ENCODE measurements at regions of chr4 and their contacts with region 1.

Region 1: GRCh38 chr4:20422398-20422797 is 170.7 kb downstream of the SLIT2 start:
- DNase-seq: peak; percentile 47
- ATAC-seq: peak; percentile 90
- H3K4me3 ChIP-seq: no peak overlapping the region
- H3K27ac ChIP-seq: no peak overlapping the region
- H3K4me1 ChIP-seq: 0 out of 4 replicates have a peak, but pooled peaks cover 0 to 2% of the 10 kb centered on the region in 2 experiments
- H3K27me3 ChIP-seq: 0 out of 2 replicates have a peak, but pooled peaks cover 7% of the 10 kb centered on the region
- CTCF ChIP-seq: peak; percentile 38 to 55 (median 50); a peak in 5 of 6 replicates
- POLR2A ChIP-seq: no peak
- RAD21 ChIP-seq: peak; percentile 60

Region 2: DNA sequence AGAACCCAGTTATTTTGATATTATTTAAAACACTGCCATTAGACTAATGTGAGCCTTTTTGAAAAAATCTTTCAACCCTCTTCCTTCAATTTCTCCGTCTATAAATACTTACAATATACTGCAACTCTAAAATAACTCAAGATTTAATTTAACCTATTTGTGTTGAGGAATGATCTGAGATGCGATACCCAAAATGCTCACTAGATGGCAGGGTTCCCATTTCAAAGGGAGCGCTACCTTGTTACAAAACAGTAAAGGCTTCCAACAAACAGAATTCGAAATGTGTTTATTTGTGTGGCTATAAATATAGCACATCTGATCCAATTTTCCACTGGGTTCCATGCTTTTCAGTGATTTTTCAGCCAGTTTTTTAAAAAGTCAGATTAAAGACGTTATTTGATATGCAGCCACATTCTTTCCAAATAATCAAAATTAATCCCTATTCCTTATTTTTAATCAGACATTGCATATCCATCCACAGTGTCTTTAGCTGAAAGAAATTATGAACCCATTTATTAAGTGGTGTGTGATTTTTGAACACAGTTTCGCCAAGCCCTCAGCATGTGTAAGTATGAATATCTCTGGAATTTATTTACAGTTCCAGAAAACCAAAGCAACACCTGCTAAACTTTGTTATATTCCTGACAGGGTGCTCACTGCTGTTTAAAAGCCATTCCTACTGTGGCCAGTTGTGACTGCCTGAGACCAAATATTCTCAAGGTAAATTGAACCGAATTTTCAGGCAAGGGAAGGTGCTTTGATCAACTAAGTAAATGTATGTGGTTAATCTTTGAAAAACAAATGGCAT is 1732.9 kb before region 1 on chr4:
- CTCF ChIA-PET with region 1: no interaction called
- POLR2A ChIA-PET with region 1: no interaction called
- RAD21 ChIA-PET with region 1: no interaction called
- intact Hi-C with region 1: loop called (anchors 10 kb)
- DNase-seq: peak; percentile 44
- ATAC-seq: 0 out of 2 replicates have a peak, but pooled peaks have one; percentile 46
- H3K4me3 ChIP-seq: no peak overlapping the region
- H3K27ac ChIP-seq: no peak overlapping the region
- H3K4me1 ChIP-seq: no peaks in the 10 kb centered on the region
- H3K27me3 ChIP-seq: no peaks in the 10 kb centered on the region; the same call in 1 of the 2 replicates
- CTCF ChIP-seq: peak; percentile 59 to 87 (median 76)
- POLR2A ChIP-seq: no peak
- RAD21 ChIP-seq: peak; percentile 81

Region 3: GRCh38 chr4:20266215-20267082 is 155.9 kb before region 1 on chr4:
- CTCF ChIA-PET with region 1: no interaction called
- POLR2A ChIA-PET with region 1: no interaction called
- RAD21 ChIA-PET with region 1: no interaction called
- intact Hi-C with region 1: no loop called
- DNase-seq: no peak
- ATAC-seq: no peak
- H3K4me3 ChIP-seq: no peak overlapping the region
- H3K27ac ChIP-seq: no peak overlapping the region
- H3K4me1 ChIP-seq: no peaks in the 10 kb centered on the region
- H3K27me3 ChIP-seq: no peaks in the 10 kb centered on the region
- CTCF ChIP-seq: no peak
- POLR2A ChIP-seq: no peak
- RAD21 ChIP-seq: no peak

Region 4: GRCh38 chr4:20598626-20599025 is 176.2 kb after region 1 on chr4:
- CTCF ChIA-PET with region 1: no interaction called
- POLR2A ChIA-PET with region 1: no interaction called
- RAD21 ChIA-PET with region 1: no interaction called
- intact Hi-C with region 1: no loop called
- DNase-seq: no peak
- ATAC-seq: no peak
- H3K4me3 ChIP-seq: no peak overlapping the region
- H3K27ac ChIP-seq: no peak overlapping the region
- H3K4me1 ChIP-seq: no peaks in the 10 kb centered on the region
- H3K27me3 ChIP-seq: no peaks in the 10 kb centered on the region; the same call in 1 of the 2 replicates
- CTCF ChIP-seq: no peak
- POLR2A ChIP-seq: no peak
- RAD21 ChIP-seq: no peak

Region 5: GRCh38 chr4:21765810-21766407 is 1343.5 kb after region 1 on chr4:
- CTCF ChIA-PET with region 1: no interaction called
- POLR2A ChIA-PET with region 1: no interaction called
- RAD21 ChIA-PET with region 1: no interaction called
- intact Hi-C with region 1: loop called (anchors 5 kb)
- DNase-seq: peak; percentile 18
- ATAC-seq: peak; percentile 74
- H3K4me3 ChIP-seq: no peak overlapping the region
- H3K27ac ChIP-seq: no peak overlapping the region
- H3K4me1 ChIP-seq: no peaks in the 10 kb centered on the region
- H3K27me3 ChIP-seq: no peaks in the 10 kb centered on the region
- CTCF ChIP-seq: peak; percentile 41 to 91 (median 80); a peak in 5 of 6 replicates
- POLR2A ChIP-seq: no peak
- RAD21 ChIP-seq: peak; percentile 54

Measured in HCT116 (cell line).